CD4-positive, alpha-beta memory T cell (primary cell): ENCODE measurements at regions of chr1 and their contacts with region 1.

Region 1: GRCh38 chr1:66282343-66282852 is 251.6 kb upstream of the SGIP1 start:
- DNase-seq: peak; percentile 71 to 89 (median 79)
- H3K4me3 ChIP-seq: no peak overlapping the region
- H3K4me3 Mint-ChIP-seq: peak overlapping the region in 4 of 8 donors; percentile 12 to 67 (median 42)
- H3K27ac ChIP-seq: peak overlapping the region; percentile 57
- H3K27ac Mint-ChIP-seq: peak overlapping the region; percentile 93 to 97 (median 95)
- H3K4me1 ChIP-seq: peaks cover 90% of the 10 kb centered on the region
- H3K4me1 Mint-ChIP-seq: peaks cover 70 to 93% (median 83%) of the 10 kb centered on the region in 4 donors
- H3K27me3 ChIP-seq: no peaks in the 10 kb centered on the region
- H3K27me3 Mint-ChIP-seq: peaks cover 0 to 3% of the 10 kb centered on the region in 2 donors

Region 2: DNA sequence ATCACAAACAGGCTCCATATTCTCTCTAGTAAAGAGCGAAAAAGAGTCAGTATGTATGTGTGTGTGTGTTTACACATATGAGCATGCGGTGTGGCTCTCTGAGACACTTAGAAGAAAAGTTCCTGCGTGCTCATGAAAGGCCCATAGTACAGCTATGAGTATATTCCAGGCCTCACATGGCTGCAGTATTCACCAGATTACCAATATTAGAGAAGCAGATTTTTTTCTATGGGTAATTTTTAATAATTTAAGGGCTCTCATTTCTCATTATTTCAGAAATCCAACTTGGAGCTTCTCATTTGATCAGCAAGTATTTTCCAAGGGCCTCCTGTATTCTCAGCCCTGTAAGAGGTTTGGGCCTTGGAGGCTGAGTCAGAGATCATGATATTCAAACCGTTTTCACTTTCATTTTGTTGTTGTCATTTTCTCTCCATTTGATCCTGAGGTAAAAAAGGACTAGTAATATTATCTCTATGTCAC is 18.6 kb after region 1 on chr1:
- CTCF ChIA-PET with region 1: interaction called, 8 read pairs
- POLR2A ChIA-PET with region 1: interaction called, 65 read pairs
- intact Hi-C with region 1: loop called (anchors 2 kb)
- DNase-seq: peak; percentile 56 to 68 (median 58)
- H3K4me3 ChIP-seq: no peak overlapping the region
- H3K4me3 Mint-ChIP-seq: peak overlapping the region; percentile 80 to 90 (median 84)
- H3K27ac ChIP-seq: peak overlapping the region; percentile 52
- H3K27ac Mint-ChIP-seq: peak overlapping the region; percentile 83 to 98 (median 96)
- H3K4me1 ChIP-seq: peaks cover 32% of the 10 kb centered on the region
- H3K4me1 Mint-ChIP-seq: peaks cover 23 to 41% (median 30%) of the 10 kb centered on the region in 4 donors
- H3K27me3 ChIP-seq: no peaks in the 10 kb centered on the region
- H3K27me3 Mint-ChIP-seq: no peaks in the 10 kb centered on the region

Region 3: GRCh38 chr1:66350001-66350547 is 67.7 kb after region 1 on chr1:
- CTCF ChIA-PET with region 1: interaction called, 21 read pairs
- POLR2A ChIA-PET with region 1: interaction called, 24 read pairs
- intact Hi-C with region 1: loop called (anchors 2 kb)
- DNase-seq: peak; percentile 73 to 82 (median 77)
- H3K4me3 ChIP-seq: peak overlapping the region in 1 of 2 donors; percentile 11
- H3K4me3 Mint-ChIP-seq: peak overlapping the region; percentile 73 to 83 (median 80)
- H3K27ac ChIP-seq: peak overlapping the region; percentile 70
- H3K27ac Mint-ChIP-seq: peak overlapping the region; percentile 89 to 100 (median 97)
- H3K4me1 ChIP-seq: peaks cover 98% of the 10 kb centered on the region
- H3K4me1 Mint-ChIP-seq: peaks cover 82 to 97% (median 89%) of the 10 kb centered on the region in 4 donors
- H3K27me3 ChIP-seq: no peaks in the 10 kb centered on the region
- H3K27me3 Mint-ChIP-seq: no peaks in the 10 kb centered on the region

Region 4: GRCh38 chr1:66374561-66375111 is 92.2 kb after region 1 on chr1:
- CTCF ChIA-PET with region 1: interaction called, 5 read pairs
- POLR2A ChIA-PET with region 1: interaction called, 4 read pairs
- intact Hi-C with region 1: loop called (anchors 2 kb)
- DNase-seq: peak; percentile 51 to 66 (median 54)
- H3K4me3 ChIP-seq: no peak overlapping the region
- H3K4me3 Mint-ChIP-seq: peak overlapping the region; percentile 47 to 86 (median 68)
- H3K27ac ChIP-seq: peak overlapping the region; percentile 58
- H3K27ac Mint-ChIP-seq: peak overlapping the region; percentile 81 to 99 (median 93)
- H3K4me1 ChIP-seq: peaks cover 69% of the 10 kb centered on the region
- H3K4me1 Mint-ChIP-seq: peaks cover 58 to 72% (median 65%) of the 10 kb centered on the region in 4 donors
- H3K27me3 ChIP-seq: no peaks in the 10 kb centered on the region
- H3K27me3 Mint-ChIP-seq: no peaks in the 10 kb centered on the region